Heart left ventricle (tissue), 16 donors: ENCODE measurements at regions of chr4 and their contacts with region 1.

Region 1: DNA sequence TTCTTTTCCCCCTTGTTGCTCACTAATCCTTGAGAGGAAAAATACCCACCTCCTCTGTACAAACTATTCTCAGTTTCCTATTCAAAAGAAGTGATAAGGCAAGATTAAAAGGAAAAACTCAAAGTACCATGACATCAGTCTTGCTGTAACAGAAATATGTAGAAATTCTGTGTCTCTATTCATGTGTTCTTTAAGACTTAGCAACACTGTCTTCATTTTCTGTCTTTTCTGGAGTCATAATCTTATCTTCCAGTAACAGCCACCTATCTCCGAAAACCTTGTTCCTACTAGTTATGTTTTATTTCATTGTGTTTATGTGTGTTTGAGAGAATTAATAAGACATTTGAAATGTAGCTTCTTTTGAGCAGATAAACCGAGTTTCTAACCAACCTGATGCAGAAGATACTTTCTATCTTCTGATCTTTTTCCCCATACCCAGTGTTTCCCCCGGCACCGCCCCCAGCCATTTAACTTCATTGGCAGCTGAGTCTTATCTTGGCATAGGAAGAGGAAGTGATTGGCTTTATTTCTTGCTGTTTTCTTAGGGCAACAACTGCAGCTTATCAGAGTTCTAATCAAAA is 8.0 kb downstream of the FAM241A start:
- DNase-seq: no peak
- ATAC-seq: no peak
- H3K4me3 ChIP-seq: no peak overlapping the region
- H3K27ac ChIP-seq: no peak overlapping the region
- H3K4me1 ChIP-seq: peaks cover 4 to 73% (median 40%) of the 10 kb centered on the region in 12 donors
- H3K27me3 ChIP-seq: no peaks in the 10 kb centered on the region
- CTCF ChIP-seq: no peak
- POLR2A ChIP-seq: no peak

Region 2: DNA sequence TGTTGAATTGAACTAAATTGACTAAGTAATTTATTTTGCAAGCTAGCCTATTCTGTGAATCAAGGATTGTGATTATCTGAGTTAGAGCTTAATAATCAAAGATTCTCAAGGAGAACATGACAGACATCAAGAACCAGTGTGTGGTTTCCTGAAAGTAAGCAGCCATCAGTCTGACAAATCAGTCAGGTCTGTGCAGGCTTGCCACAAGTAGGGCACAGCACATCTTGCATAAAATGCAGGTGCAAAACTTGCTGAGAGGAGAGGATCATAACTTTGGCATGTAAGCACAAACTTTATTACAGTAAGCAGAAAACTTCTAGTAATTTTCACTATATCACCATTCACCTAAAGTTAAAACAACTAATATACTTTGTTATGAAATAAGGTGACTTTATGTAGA is 14.5 kb after region 1 on chr4:
- intact Hi-C with region 1: loop called in 1 of 10 experiments (anchors 2 kb)
- DNase-seq: no peak
- ATAC-seq: no peak
- H3K4me3 ChIP-seq: no peak overlapping the region
- H3K27ac ChIP-seq: no peak overlapping the region
- H3K4me1 ChIP-seq: peaks cover 0 to 22% (median 5%) of the 10 kb centered on the region in 12 donors
- H3K27me3 ChIP-seq: no peaks in the 10 kb centered on the region
- CTCF ChIP-seq: no peak
- POLR2A ChIP-seq: no peak

Region 3: GRCh38 chr4:112189754-112190153 is 36.5 kb after region 1 on chr4:
- intact Hi-C with region 1: loop called in 1 of 10 experiments (anchors 5 kb)
- DNase-seq: no peak
- ATAC-seq: no peak
- H3K4me3 ChIP-seq: no peak overlapping the region
- H3K27ac ChIP-seq: no peak overlapping the region
- H3K4me1 ChIP-seq: peaks cover 0 to 8% (median 0%) of the 10 kb centered on the region in 12 donors
- H3K27me3 ChIP-seq: no peaks in the 10 kb centered on the region
- CTCF ChIP-seq: peak in 6 of 12 donors; percentile 10 to 45 (median 24)
- POLR2A ChIP-seq: no peak

Region 4: DNA sequence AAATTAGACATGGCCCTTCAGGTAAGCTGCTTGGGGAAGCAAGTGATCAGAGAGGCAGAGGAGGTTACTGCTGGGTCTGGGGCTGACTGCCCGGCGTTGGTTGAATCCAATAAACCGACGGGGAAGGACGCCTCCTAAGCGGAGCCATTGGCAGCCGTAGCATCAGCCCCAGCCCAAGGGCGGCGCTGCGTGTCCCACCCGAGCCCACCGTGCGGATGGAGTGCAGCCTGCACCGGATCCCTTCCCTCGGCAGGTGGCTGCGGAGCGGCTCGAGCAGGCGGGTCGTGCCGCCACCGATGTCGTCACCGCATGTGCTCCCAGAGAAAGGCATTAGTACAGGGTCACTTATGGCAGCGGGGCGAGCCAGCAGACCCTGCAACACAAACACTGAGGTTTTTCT is 226.0 kb after region 1 on chr4:
- intact Hi-C with region 1: no loop called
- DNase-seq: no peak
- ATAC-seq: peak in 1 of 4 donors; percentile 36
- H3K4me3 ChIP-seq: no peak overlapping the region
- H3K27ac ChIP-seq: no peak overlapping the region
- H3K4me1 ChIP-seq: peaks cover 0 to 6% (median 0%) of the 10 kb centered on the region in 12 donors
- H3K27me3 ChIP-seq: peaks cover 0 to 4% (median 0%) of the 10 kb centered on the region in 9 donors
- CTCF ChIP-seq: no peak
- POLR2A ChIP-seq: no peak